Gastrocnemius medialis (tissue), 4 donors: ENCODE measurements at regions of chr11 and their contacts with region 1.

Region 1: GRCh38 chr11:112280268-112281126 is 19.8 kb upstream of the PLET1 start:
- DNase-seq: peak; percentile 35 to 59
- ATAC-seq: peak; percentile 84 to 96
- H3K4me3 ChIP-seq: peak overlapping the region; percentile 43 to 67 (median 60)
- H3K27ac ChIP-seq: peak overlapping the region in 1 of 4 donors; percentile 29
- H3K4me1 ChIP-seq: peaks cover 0 to 4% of the 10 kb centered on the region in 2 donors
- H3K27me3 ChIP-seq: no peaks in the 10 kb centered on the region
- CTCF ChIP-seq: peak; percentile 48 to 73 (median 66)
- POLR2A ChIP-seq: no peak

Region 2: DNA sequence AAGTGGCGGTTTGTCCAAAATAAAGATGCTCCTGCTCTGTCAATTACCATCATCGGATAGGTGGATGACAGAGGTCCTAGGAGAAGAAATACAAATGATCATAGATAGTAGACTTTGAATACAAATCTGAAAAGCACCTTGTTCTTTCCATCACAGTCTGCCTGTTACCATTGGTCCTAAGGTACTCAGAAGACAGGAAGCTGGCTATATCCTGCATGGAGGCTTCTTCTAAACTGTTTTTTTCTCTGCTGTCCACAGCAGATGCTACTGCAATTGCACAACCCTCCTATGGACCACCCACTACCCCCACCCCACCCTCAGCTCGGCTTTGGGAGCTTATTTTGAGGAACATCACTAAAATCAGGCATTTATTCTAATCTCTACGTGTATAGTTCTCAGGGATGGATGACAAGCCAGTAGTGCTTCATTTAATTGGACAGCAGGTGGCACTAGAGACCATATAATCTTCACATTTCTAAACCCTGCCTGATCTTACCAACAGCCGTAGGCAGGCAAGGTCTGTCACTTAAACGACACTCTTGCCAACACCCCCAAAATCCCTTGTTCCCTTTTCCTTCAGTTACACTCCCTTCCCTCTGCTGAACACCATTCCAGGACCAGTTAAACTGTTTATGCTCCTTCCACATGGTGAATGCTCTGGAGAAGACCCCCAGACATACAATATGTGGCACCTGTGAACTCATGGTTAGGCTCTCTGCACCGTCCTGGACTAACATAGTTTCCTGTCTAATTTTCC is 60.8 kb before region 1 on chr11:
- in situ Hi-C with region 1: loop called (anchors 5 kb)
- intact Hi-C with region 1: loop called (anchors 1 kb)
- DNase-seq: peak; percentile 13 to 21
- ATAC-seq: peak; percentile 92 to 97
- H3K4me3 ChIP-seq: no peak overlapping the region
- H3K27ac ChIP-seq: no peak overlapping the region
- H3K4me1 ChIP-seq: no peaks in the 10 kb centered on the region
- H3K27me3 ChIP-seq: no peaks in the 10 kb centered on the region
- CTCF ChIP-seq: peak; percentile 83 to 86 (median 85)
- POLR2A ChIP-seq: no peak

Region 3: DNA sequence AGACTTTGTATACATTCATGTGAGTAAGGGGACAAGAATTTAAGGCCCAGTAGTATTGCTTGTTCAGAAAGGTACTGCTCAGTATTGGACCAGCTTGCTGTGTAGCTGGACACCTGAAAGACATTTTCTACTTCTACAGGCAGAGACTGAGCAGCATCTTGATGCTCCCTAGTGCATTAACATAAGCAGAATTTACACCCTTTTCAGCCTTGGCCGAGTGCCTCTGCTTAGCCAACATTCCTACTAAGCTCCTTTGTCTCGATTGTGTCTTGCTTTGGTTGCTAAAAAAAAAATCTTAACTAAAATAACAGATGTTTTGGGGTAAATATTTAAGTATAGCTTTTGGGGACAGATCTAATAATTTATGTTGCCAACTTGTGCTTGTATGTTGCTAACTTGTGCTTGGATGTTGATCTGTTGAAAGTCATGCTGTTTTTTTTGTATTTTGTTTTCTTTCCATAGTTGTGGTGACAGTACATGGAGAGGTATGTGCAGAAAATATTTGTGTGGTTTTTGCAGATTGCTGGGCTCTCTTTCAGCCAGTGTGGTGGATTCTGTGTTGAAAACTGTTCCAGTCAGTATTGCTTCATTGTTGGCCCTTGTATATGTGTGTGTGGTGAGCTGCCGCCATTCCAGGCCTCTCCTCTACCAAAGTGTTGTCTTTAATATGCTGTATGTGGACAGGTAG is 50.6 kb before region 1 on chr11:
- in situ Hi-C with region 1: no loop called
- intact Hi-C with region 1: no loop called
- DNase-seq: no peak
- ATAC-seq: no peak
- H3K4me3 ChIP-seq: no peak overlapping the region
- H3K27ac ChIP-seq: no peak overlapping the region
- H3K4me1 ChIP-seq: peaks cover 10 to 11% of the 10 kb centered on the region in 2 donors
- H3K27me3 ChIP-seq: no peaks in the 10 kb centered on the region
- CTCF ChIP-seq: no peak
- POLR2A ChIP-seq: no peak

Region 4: DNA sequence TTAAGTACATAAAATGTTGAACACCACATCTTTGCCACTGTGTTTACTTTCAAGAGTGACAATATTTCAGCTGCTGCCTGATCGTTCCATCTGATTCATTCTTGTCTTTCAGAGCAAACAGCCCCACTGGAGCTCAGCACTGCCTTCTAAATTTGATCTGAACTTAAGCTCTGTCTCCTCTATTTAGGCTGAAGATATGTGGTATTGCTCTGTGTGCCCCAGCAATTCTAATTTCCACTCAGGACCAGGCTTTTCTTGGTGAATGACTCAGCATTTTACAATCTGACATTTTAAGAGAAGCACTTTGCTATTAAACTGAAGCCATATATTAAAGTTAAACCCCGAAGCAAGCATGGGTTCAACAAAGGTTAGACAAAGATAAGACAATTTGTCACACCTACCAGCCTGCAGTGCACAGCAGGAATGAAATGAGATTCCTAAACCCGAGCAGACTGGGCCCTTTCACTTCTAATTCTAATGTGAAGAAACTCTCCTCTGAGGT is 21.8 kb after region 1 on chr11:
- in situ Hi-C with region 1: no loop called
- intact Hi-C with region 1: no loop called
- DNase-seq: no peak
- ATAC-seq: no peak
- H3K4me3 ChIP-seq: no peak overlapping the region
- H3K27ac ChIP-seq: peak overlapping the region; percentile 18 to 55 (median 46)
- H3K4me1 ChIP-seq: peaks cover 20 to 22% of the 10 kb centered on the region in 2 donors
- H3K27me3 ChIP-seq: no peaks in the 10 kb centered on the region
- CTCF ChIP-seq: no peak
- POLR2A ChIP-seq: no peak